ENCODE measurements at regions of chr7 and their contacts with region 1.

Region 1: GRCh38 chr7:155724327-155725005 is 80.0 kb downstream of the RBM33 start:
- DNase-seq: no peak
- ATAC-seq: peak; percentile 41
- H3K4me3 Mint-ChIP-seq: peak overlapping the region; percentile 71
- H3K27ac Mint-ChIP-seq: peak overlapping the region; percentile 83
- H3K4me1 Mint-ChIP-seq: peaks cover 83% of the 10 kb centered on the region
- H3K27me3 Mint-ChIP-seq: no peaks in the 10 kb centered on the region
- CTCF ChIP-seq: no peak

Region 2: GRCh38 chr7:155543011-155543876 is 181.2 kb before region 1 on chr7:
- CTCF ChIA-PET with region 1: no interaction called
- POLR2A ChIA-PET with region 1: no interaction called
- intact Hi-C with region 1: no loop called
- DNase-seq: no peak
- ATAC-seq: no peak
- H3K4me3 Mint-ChIP-seq: no peak overlapping the region
- H3K27ac Mint-ChIP-seq: no peak overlapping the region
- H3K4me1 Mint-ChIP-seq: no peaks in the 10 kb centered on the region
- H3K27me3 Mint-ChIP-seq: peaks cover 15% of the 10 kb centered on the region
- CTCF ChIP-seq: no peak

Region 3: GRCh38 chr7:155644178-155644970 is 80.1 kb before region 1 on chr7 and contains the start of gene RBM33:
- CTCF ChIA-PET with region 1: no interaction called
- POLR2A ChIA-PET with region 1: interaction called, 18 read pairs
- intact Hi-C with region 1: loop called (anchors 1 kb)
- DNase-seq: peak; percentile 86
- ATAC-seq: peak; percentile 74
- H3K4me3 Mint-ChIP-seq: peak within 1 kb of the TSS; percentile 98
- H3K27ac Mint-ChIP-seq: peak within 1 kb of the TSS; percentile 98
- H3K4me1 Mint-ChIP-seq: peaks cover 47% of the 10 kb centered on the region
- H3K27me3 Mint-ChIP-seq: no peaks in the 10 kb centered on the region
- CTCF ChIP-seq: no peak
- total RNA-seq, gene RBM33: 107 and 117 TPM in 2 replicates

Region 4: GRCh38 chr7:155681663-155682062 is 42.8 kb before region 1 on chr7:
- CTCF ChIA-PET with region 1: no interaction called
- POLR2A ChIA-PET with region 1: no interaction called
- intact Hi-C with region 1: loop called (anchors 2 kb)
- DNase-seq: no peak
- ATAC-seq: peak; percentile 14
- H3K4me3 Mint-ChIP-seq: peak overlapping the region; percentile 49
- H3K27ac Mint-ChIP-seq: peak overlapping the region; percentile 69
- H3K4me1 Mint-ChIP-seq: peaks cover 46% of the 10 kb centered on the region
- H3K27me3 Mint-ChIP-seq: no peaks in the 10 kb centered on the region
- CTCF ChIP-seq: no peak

Region 5: GRCh38 chr7:155709453-155709852 is 15.0 kb before region 1 on chr7:
- CTCF ChIA-PET with region 1: no interaction called
- POLR2A ChIA-PET with region 1: interaction called, 3 read pairs
- intact Hi-C with region 1: loop called (anchors 2 kb)
- DNase-seq: no peak
- ATAC-seq: no peak
- H3K4me3 Mint-ChIP-seq: no peak overlapping the region
- H3K27ac Mint-ChIP-seq: no peak overlapping the region
- H3K4me1 Mint-ChIP-seq: peaks cover 27% of the 10 kb centered on the region
- H3K27me3 Mint-ChIP-seq: no peaks in the 10 kb centered on the region
- CTCF ChIP-seq: no peak

Region 6: DNA sequence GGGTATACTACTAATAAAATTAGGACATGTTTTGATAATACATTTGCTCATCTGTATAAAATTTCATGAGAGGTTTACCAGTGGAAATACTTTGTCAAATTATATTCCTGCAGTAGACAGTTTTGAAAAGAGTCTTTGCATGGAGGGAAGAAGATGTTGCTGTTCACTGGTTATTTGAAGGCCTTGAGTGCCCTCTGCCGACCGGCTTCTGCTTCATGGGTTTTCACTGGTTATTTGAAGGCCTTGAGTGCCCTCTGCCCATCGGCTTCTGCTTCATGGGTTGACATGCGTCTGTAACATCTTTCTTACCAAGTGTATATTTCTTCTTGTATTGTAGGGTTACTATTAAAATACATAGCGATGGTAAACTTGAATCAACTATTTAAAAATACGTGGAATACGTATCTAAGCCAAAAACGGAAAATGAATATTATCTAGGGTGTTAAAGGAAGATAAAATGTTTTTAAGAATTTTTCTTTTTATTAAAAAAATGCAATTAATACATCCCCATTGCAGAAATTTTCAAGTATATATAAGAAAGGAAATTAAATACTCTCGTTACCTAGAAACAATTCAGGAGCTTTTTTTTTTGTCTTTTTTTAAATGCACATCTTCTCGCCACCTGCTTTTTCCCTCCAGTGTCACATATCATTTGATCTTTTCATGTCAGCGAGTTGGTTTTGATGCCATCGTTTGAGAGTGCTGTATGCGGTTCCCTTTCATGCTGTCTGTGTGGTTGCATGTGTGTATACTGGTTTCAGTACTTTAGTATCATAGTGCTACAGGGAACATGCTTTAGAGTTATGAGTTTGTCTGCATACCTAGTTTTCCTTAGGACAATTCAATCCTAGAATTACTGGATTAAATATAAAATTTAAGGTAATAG is 14.4 kb after region 1 on chr7:
- CTCF ChIA-PET with region 1: interaction called, 3 read pairs
- POLR2A ChIA-PET with region 1: no interaction called
- intact Hi-C with region 1: loop called (anchors 2 kb)
- DNase-seq: peak; percentile 42
- ATAC-seq: peak; percentile 64
- H3K4me3 Mint-ChIP-seq: no peak overlapping the region
- H3K27ac Mint-ChIP-seq: no peak overlapping the region
- H3K4me1 Mint-ChIP-seq: peaks cover 58% of the 10 kb centered on the region
- H3K27me3 Mint-ChIP-seq: no peaks in the 10 kb centered on the region
- CTCF ChIP-seq: peak; percentile 30

Region 7: DNA sequence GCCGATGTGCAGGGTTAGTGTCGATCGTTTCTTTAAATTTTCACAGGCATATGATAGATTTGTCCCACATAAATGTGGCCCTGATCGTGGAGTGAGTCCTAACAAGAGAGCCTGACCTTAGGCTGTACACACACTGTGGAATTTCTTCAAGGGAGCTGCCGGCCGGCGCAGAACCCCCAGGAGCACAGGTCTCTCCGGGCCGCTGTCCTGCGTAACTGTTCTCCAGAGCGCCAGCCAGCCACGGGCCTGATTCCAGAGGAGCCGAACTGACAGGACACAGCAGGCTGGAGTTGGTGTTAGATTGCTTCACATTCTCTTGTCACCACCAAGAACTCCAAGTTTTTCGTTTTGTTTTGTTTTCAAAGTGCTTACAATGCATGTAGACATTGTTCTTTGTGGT is 50.5 kb after region 1 on chr7:
- CTCF ChIA-PET with region 1: no interaction called
- POLR2A ChIA-PET with region 1: no interaction called
- intact Hi-C with region 1: no loop called
- DNase-seq: no peak
- ATAC-seq: no peak
- H3K4me3 Mint-ChIP-seq: no peak overlapping the region
- H3K27ac Mint-ChIP-seq: no peak overlapping the region
- H3K4me1 Mint-ChIP-seq: no peaks in the 10 kb centered on the region
- H3K27me3 Mint-ChIP-seq: no peaks in the 10 kb centered on the region
- CTCF ChIP-seq: no peak

Region 8: DNA sequence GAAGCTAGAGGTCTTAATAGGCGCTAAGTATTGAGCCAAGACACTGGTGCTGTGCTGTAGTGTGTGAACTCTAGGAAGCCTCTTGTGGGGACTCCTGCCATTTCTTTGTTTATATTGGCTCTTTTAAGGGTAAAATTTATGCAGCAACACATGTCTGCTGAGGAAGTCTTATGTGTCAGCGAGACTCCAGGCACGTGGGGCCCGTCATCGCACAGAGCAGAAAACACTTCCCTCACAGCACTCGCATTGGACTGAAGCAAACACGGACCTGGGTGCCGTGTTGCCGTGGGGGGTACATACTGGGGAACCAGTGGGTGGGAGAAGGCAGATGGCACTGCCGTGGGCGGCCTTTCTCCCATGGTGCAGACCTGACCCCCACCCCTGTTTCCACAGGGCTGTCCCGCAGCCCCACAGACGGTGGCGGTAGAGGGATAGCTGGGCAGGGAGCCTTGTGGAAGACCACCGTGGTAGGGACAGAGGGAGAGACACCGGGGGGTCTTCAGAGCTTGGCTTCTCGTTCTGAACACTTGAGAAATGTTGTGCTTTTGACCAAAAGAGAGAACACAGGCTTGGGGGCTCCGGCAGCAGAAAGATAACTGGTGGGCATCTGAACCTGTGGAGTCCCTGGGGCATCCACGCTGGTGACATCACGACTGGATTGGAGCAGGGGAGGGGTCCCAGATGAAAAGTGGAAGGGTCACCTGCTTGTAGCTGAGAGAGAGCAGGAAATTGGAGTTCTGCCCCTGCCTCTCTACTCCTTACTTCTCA is 372.5 kb after region 1 on chr7:
- CTCF ChIA-PET with region 1: no interaction called
- POLR2A ChIA-PET with region 1: no interaction called
- intact Hi-C with region 1: no loop called
- DNase-seq: no peak
- ATAC-seq: no peak
- H3K4me3 Mint-ChIP-seq: no peak overlapping the region
- H3K27ac Mint-ChIP-seq: no peak overlapping the region
- H3K4me1 Mint-ChIP-seq: no peaks in the 10 kb centered on the region
- H3K27me3 Mint-ChIP-seq: peaks cover 3% of the 10 kb centered on the region
- CTCF ChIP-seq: no peak